Psoas muscle (tissue), 8 donors: ENCODE measurements at regions of chr5 and their contacts with region 1.

Region 1: GRCh38 chr5:103119765-103120606 is at the starts of genes GIN1 and PPIP5K2:
- DNase-seq: peak; percentile 95 to 97
- ATAC-seq: peak; percentile 98 to 100 (median 99)
- H3K4me3 ChIP-seq: peak within 1 kb of the TSS; percentile 89
- H3K27ac ChIP-seq: peak within 1 kb of the TSS; percentile 92
- H3K4me1 ChIP-seq: peaks cover 38% of the 10 kb centered on the region
- H3K27me3 ChIP-seq: no peaks in the 10 kb centered on the region
- CTCF ChIP-seq: no peak
- total RNA-seq, gene GIN1: 9.4 to 12.5 (median 11.8) TPM
- total RNA-seq, gene PPIP5K2: 7.4 to 11.0 (median 8.9) TPM

Region 2: DNA sequence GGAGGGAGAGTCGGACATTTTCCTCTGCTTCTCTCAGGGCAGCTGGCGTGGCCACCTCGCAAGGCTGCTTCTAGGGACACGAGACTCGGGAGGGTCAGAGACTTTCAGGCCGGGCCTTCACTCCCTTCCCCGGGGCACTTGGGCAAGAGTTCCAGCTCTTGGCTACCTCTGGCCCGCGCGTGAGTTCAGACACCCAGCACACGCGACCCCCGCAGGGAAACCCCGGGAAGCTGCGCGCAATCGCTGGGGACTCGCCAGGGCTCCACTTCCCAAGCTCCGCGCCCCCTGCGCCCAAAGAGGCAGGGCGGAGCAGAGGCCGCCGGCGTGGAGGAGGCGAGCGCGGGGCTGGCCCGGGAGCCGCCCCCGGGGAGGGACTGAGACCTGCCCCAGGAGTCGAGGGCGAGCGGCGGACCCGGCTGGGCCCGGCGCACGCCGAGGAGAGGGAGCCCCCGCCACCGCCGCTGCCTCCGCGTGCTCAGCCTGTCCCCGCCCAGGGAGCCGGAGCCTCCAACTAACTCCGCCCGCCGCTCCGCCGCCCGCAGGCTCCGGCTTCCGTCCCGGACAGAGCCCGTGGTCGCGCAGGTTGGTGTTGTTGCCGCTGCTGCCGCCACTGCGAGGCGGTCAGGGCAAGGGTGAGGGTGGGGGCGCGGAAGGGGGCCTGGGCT is 365.1 kb before region 1 on chr5 and contains the start of gene PAM:
- intact Hi-C with region 1: loop called in 1 of 2 experiments (anchors 10 kb)
- DNase-seq: peak; percentile 82 to 90
- ATAC-seq: peak; percentile 87 to 91 (median 88)
- H3K4me3 ChIP-seq: peak within 1 kb of the TSS; percentile 94
- H3K27ac ChIP-seq: peak within 1 kb of the TSS; percentile 97
- H3K4me1 ChIP-seq: peaks cover 31% of the 10 kb centered on the region
- H3K27me3 ChIP-seq: no peaks in the 10 kb centered on the region
- CTCF ChIP-seq: no peak
- total RNA-seq, gene PAM: 99.1 to 279 (median 191) TPM

Region 3: DNA sequence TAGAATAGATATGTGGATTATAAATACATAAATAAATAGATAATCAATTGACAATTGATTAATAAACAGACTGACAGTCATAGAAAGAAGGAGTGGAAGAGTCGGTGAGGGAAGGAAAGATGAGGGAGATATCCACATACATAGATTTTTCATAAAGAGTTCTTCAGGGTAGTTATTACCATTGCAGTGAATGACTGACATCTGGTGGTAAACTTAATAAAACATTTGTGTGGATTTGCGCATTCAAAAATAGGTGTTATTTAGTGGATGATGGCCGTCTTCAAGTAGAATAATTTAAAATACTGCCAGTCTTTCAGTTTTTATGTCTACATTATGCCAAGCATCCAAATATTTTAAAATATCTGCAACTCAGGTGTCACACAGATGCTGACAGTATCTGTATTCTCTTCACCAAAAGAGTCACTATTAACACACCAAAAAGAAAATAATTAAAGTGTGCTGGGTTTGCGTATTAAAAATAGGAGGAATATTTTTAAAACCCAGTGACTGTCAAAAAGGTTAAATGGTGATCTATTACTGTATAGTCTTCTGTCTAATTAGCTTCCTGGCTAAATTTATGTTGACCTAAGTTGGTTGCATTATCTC is 78.8 kb before region 1 on chr5:
- intact Hi-C with region 1: no loop called
- DNase-seq: no peak
- ATAC-seq: peak in 1 of 4 donors; percentile 72
- H3K4me3 ChIP-seq: no peak overlapping the region
- H3K27ac ChIP-seq: no peak overlapping the region
- H3K4me1 ChIP-seq: no peaks in the 10 kb centered on the region
- H3K27me3 ChIP-seq: no peaks in the 10 kb centered on the region
- CTCF ChIP-seq: peak; percentile 72

Region 4: GRCh38 chr5:103428411-103428871 is 308.5 kb after region 1 on chr5:
- intact Hi-C with region 1: no loop called
- DNase-seq: peak in 1 of 2 donors; percentile 55
- ATAC-seq: peak in 3 of 4 donors; percentile 76 to 89 (median 81)
- H3K4me3 ChIP-seq: no peak overlapping the region
- H3K27ac ChIP-seq: peak overlapping the region; percentile 24
- H3K4me1 ChIP-seq: peaks cover 15% of the 10 kb centered on the region
- H3K27me3 ChIP-seq: no peaks in the 10 kb centered on the region
- CTCF ChIP-seq: no peak